CD14-positive monocyte (primary cell): ENCODE measurements at regions of chr7 and their contacts with region 1.

Region 1: DNA sequence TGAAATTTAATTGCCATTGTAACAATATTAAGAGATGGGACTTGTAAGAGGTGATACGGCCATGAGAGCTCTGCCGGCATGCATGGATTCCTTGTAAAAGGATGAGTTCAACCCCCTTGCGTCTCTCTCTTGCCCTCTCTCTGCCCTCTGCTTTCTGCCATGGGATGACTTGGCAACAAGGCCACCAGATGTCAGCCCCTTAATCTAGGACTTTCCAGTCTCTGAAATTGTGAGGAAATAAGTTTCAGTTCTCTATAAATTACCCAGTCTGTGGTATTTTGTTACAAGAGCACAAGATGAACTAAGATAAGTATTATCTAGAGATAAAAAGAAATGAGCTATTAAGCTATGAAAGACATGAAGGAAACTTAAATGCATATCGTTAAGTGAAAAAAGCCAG is 145.7 kb upstream of the AHR start:
- DNase-seq: peak; percentile 86 to 94 (median 93)
- H3K4me3 ChIP-seq: peak overlapping the region in 1 of 3 experiments; percentile 27
- H3K4me3 Mint-ChIP-seq: peak overlapping the region in 1 of 2 donors; percentile 76
- H3K27ac ChIP-seq: peak overlapping the region; percentile 54 to 89
- H3K27ac Mint-ChIP-seq: peak overlapping the region; percentile 96 to 99 (median 98)
- H3K4me1 ChIP-seq: peaks cover 43 to 55% of the 10 kb centered on the region in 2 donors
- H3K4me1 Mint-ChIP-seq: peaks cover 49% of the 10 kb centered on the region
- H3K27me3 ChIP-seq: no peaks in the 10 kb centered on the region
- H3K27me3 Mint-ChIP-seq: no peaks in the 10 kb centered on the region
- CTCF ChIP-seq: no peak

Region 2: DNA sequence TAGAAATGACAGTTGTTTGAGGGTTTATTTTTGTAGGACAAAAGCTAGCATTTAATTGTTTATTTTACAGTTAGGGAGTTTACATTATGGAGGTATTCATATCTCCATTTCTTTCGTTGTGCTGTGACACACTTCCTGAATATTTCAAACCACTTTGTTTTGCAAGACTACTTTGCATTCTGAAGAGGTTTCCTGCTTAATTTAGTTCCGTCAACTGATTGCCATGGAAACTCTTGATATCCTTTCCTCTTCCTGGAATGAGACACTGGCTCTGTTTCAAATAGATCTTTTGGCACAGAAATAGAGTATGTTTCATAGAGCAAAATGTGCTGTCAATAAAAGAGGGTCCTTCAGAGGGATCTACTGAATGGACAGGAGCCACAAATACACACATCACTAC is 111.4 kb before region 1 on chr7:
- intact Hi-C with region 1: loop called in 1 of 2 experiments (anchors 10 kb)
- DNase-seq: peak; percentile 87 to 99 (median 92)
- H3K4me3 ChIP-seq: peak overlapping the region in 1 of 3 experiments; percentile 33
- H3K4me3 Mint-ChIP-seq: peak overlapping the region in 1 of 2 donors; percentile 51
- H3K27ac ChIP-seq: peak overlapping the region in 1 of 2 donors; percentile 94
- H3K27ac Mint-ChIP-seq: peak overlapping the region; percentile 88 to 99 (median 95)
- H3K4me1 ChIP-seq: peaks cover 43 to 77% of the 10 kb centered on the region in 2 donors
- H3K4me1 Mint-ChIP-seq: peaks cover 57% of the 10 kb centered on the region
- H3K27me3 ChIP-seq: no peaks in the 10 kb centered on the region
- H3K27me3 Mint-ChIP-seq: peaks cover 0 to 3% (median 0%) of the 10 kb centered on the region in 3 donors
- CTCF ChIP-seq: no peak

Region 3: DNA sequence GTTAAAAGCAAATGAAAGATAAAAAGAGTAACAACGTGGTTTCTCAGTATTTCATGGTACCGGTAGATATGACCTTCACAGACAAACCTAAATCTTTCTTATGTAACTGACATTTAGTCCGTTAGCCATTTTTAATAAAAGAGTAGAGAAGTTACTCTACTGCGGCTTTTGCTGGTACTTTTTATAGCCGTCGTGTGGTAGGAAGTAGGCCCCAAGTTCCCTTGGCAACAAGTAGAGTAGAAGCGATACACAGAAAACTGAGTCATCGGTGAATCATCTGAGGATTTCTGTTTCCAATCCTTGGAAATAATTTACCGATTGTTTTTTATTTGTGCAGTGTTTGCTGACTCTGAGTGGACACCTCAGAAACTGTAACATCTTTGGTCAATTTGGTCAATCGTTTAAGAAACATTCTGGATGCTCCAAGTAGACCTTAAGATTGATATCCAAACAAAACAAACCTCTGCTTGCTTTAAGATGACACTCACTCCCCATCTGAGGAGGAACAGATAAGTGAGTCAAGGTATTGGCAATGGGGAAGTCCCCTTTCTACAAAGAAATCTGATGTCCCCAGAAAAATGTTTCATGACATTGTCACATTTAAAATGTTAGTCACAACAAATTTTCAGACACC is 81.8 kb after region 1 on chr7:
- intact Hi-C with region 1: loop called (anchors 5 to 10 kb)
- DNase-seq: peak; percentile 93 to 99 (median 97)
- H3K4me3 ChIP-seq: peak overlapping the region; percentile 12 to 29 (median 19)
- H3K4me3 Mint-ChIP-seq: peak overlapping the region; percentile 68 to 81
- H3K27ac ChIP-seq: peak overlapping the region; percentile 96 to 100
- H3K27ac Mint-ChIP-seq: peak overlapping the region; percentile 99 to 100 (median 100)
- H3K4me1 ChIP-seq: peaks cover 19 to 24% of the 10 kb centered on the region in 2 donors
- H3K4me1 Mint-ChIP-seq: peaks cover 26% of the 10 kb centered on the region
- H3K27me3 ChIP-seq: no peaks in the 10 kb centered on the region
- H3K27me3 Mint-ChIP-seq: peaks cover 0 to 3% (median 0%) of the 10 kb centered on the region in 3 donors
- CTCF ChIP-seq: no peak

Region 4: GRCh38 chr7:19117091-19117869 is 1964.6 kb after region 1 on chr7 and contains the start of gene TWIST1:
- intact Hi-C with region 1: no loop called
- DNase-seq: no peak
- H3K4me3 ChIP-seq: peak within 1 kb of the TSS; percentile 13 to 63 (median 20)
- H3K4me3 Mint-ChIP-seq: peak within 1 kb of the TSS; percentile 63 to 85
- H3K27ac ChIP-seq: no peak within 1 kb of the TSS
- H3K27ac Mint-ChIP-seq: no peak within 1 kb of the TSS
- H3K4me1 ChIP-seq: peaks cover 17 to 30% of the 10 kb centered on the region in 2 donors
- H3K4me1 Mint-ChIP-seq: peaks cover 23% of the 10 kb centered on the region
- H3K27me3 ChIP-seq: peaks cover 90 to 93% of the 10 kb centered on the region in 2 donors
- H3K27me3 Mint-ChIP-seq: peaks cover 89 to 95% (median 90%) of the 10 kb centered on the region in 3 donors
- CTCF ChIP-seq: no peak
- polyA plus RNA-seq, gene TWIST1: not detected